A549 (cell line): ENCODE measurements at regions of chr1 and their contacts with region 1.

Region 1: GRCh38 chr1:183281553-183282091 is 95.6 kb downstream of the LAMC2 start:
- DNase-seq: peak; percentile 74 to 87
- ATAC-seq: peak; percentile 90 to 94
- H3K4me3 ChIP-seq: no peak overlapping the region
- H3K27ac ChIP-seq: 0 out of 6 replicates have a peak overlapping the region, but pooled peaks of 1 of the 2 experiments have one; percentile 2
- H3K4me1 ChIP-seq: peaks cover 3% of the 10 kb centered on the region; the same call in 1 of the 3 replicates
- CTCF ChIP-seq: peak; percentile 89
- EP300 ChIP-seq: no peak
- POLR2A ChIP-seq: no peak
- RAD21 ChIP-seq: peak; percentile 85 to 87

Region 2: DNA sequence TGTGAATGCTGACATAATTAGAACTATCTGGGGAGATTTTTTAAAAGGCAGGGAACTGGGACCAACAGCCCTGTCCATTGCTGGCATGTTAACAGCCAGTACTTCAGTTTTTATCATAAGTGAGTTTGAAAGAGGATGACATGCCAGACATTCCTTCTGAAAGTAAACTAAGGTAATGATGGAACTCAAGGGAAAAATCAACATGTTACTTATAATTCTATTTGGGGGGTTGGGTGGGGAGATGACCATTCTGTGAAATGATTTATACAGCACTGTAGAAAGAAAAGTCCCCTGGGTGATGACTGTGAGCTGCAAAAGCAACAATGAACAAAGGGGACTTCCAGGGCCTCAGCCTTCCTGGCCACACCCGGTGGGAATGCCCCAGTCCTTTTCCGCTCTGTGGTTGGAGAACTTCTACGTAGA is 101.0 kb before region 1 on chr1:
- CTCF ChIA-PET with region 1: no interaction called
- POLR2A ChIA-PET with region 1: no interaction called
- DNase-seq: peak; percentile 85 to 95
- ATAC-seq: peak; percentile 95 to 96
- H3K4me3 ChIP-seq: no peak overlapping the region
- H3K27ac ChIP-seq: peak overlapping the region; percentile 76 to 79
- H3K4me1 ChIP-seq: peaks cover 44% of the 10 kb centered on the region
- CTCF ChIP-seq: no peak
- EP300 ChIP-seq: peak in 1 of 2 experiments; percentile 66; a peak in 2 of 5 replicates
- POLR2A ChIP-seq: no peak
- RAD21 ChIP-seq: peak in 1 of 2 experiments; percentile 37; a peak in 3 of 5 replicates

Region 3: GRCh38 chr1:183259886-183260285 is 21.7 kb before region 1 on chr1:
- CTCF ChIA-PET with region 1: interaction called, 15 read pairs
- POLR2A ChIA-PET with region 1: no interaction called
- DNase-seq: no peak
- ATAC-seq: no peak
- H3K4me3 ChIP-seq: no peak overlapping the region
- H3K27ac ChIP-seq: no peak overlapping the region
- H3K4me1 ChIP-seq: no peaks in the 10 kb centered on the region
- CTCF ChIP-seq: no peak
- EP300 ChIP-seq: no peak
- POLR2A ChIP-seq: no peak
- RAD21 ChIP-seq: no peak

Region 4: DNA sequence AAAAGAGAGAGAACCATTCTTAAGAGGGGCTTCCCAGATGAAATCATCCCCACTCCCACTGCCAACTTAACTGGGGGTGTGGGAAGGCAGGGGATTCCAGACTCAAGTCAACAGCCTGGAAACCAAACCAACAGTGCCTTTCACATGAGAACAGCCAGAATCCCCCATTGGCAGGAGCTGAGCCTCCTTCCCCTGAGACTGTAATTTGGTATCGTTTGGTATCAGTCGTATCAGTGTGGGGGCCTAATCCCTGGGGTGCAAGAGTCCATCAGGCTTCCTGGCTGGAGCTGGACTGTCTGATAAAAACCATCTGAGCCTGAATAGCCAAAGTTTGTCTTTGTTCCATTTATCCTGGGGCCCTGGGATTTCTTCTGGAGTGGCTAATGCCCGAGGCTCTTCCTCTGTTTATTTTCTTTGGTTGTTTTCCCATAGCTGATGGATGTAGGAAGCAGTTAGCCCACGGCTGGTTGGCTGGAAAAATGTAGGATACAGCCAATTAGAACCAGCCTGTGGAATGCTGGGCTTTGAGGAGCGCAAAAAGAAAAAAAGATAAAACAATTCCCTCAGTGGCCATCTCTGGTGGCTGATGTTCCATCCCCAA is 11.0 kb before region 1 on chr1:
- CTCF ChIA-PET with region 1: interaction called, 71 read pairs
- POLR2A ChIA-PET with region 1: interaction called, 3 read pairs
- DNase-seq: no peak
- ATAC-seq: no peak
- H3K4me3 ChIP-seq: no peak overlapping the region
- H3K27ac ChIP-seq: 0 out of 6 replicates have a peak overlapping the region, but pooled peaks of 1 of the 2 experiments have one; percentile 2
- H3K4me1 ChIP-seq: peaks cover 24% of the 10 kb centered on the region
- CTCF ChIP-seq: no peak
- EP300 ChIP-seq: no peak
- POLR2A ChIP-seq: no peak
- RAD21 ChIP-seq: no peak

Region 5: GRCh38 chr1:183291802-183292514 is 10.3 kb after region 1 on chr1:
- CTCF ChIA-PET with region 1: interaction called, 36 read pairs
- POLR2A ChIA-PET with region 1: no interaction called
- DNase-seq: no peak
- ATAC-seq: no peak
- H3K4me3 ChIP-seq: no peak overlapping the region
- H3K27ac ChIP-seq: no peak overlapping the region
- H3K4me1 ChIP-seq: no peaks in the 10 kb centered on the region
- CTCF ChIP-seq: no peak
- EP300 ChIP-seq: no peak
- POLR2A ChIP-seq: no peak
- RAD21 ChIP-seq: no peak

Region 6: DNA sequence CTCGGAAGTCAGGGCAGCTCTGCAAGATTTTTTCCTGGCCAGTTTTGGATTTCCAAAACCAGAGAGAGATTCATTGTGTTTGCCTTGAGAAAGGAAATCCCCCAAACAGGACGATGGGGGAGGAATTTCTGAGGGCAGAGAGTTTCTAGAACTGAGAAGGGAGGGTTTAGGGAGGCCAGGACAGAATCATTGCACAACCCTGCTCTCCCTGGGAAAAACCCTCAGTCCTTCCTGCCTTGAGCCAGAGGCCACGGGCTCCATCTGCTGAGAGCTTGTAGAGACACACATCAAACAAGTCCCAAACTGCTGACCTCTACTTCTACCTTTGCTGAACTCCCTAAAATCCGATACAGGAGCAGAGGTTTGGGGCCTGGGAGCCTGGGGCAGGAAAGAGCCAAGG is 36.8 kb after region 1 on chr1:
- CTCF ChIA-PET with region 1: interaction called, 64 read pairs
- POLR2A ChIA-PET with region 1: no interaction called
- DNase-seq: peak; percentile 48 to 77
- ATAC-seq: peak; percentile 97 to 99
- H3K4me3 ChIP-seq: no peak overlapping the region
- H3K27ac ChIP-seq: peak overlapping the region in 1 of 2 experiments; percentile 44; a peak in 2 of 6 replicates
- H3K4me1 ChIP-seq: peaks cover 9% of the 10 kb centered on the region; the same call in 2 of the 3 replicates
- CTCF ChIP-seq: peak; percentile 49
- EP300 ChIP-seq: no peak
- POLR2A ChIP-seq: no peak
- RAD21 ChIP-seq: peak; percentile 72 to 78

Region 7: DNA sequence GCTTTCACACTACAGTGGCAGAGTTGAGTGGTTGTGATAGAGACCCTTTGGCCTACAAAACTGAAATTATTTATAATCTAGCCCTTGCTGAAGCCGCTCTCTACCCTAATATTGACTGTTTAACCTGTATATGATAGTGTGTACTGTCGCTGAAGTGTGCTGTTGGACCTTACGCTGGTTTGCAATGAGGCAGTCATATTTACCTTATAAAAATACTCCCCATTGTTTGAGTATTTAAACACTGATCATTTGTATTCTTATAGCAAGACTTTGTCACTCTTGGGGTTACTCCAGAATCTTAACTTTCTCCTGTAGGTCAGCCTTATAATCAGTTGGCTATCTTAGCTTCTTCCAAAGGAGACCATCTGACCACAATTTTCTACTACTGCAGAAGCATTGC is 247.0 kb after region 1 on chr1:
- CTCF ChIA-PET with region 1: no interaction called
- POLR2A ChIA-PET with region 1: no interaction called
- DNase-seq: no peak
- ATAC-seq: no peak
- H3K4me3 ChIP-seq: no peak overlapping the region
- H3K27ac ChIP-seq: no peak overlapping the region
- H3K4me1 ChIP-seq: 0 out of 3 replicates have a peak, but pooled peaks cover 6% of the 10 kb centered on the region
- CTCF ChIP-seq: no peak
- EP300 ChIP-seq: no peak
- POLR2A ChIP-seq: no peak
- RAD21 ChIP-seq: no peak

Region 8: GRCh38 chr1:183699616-183700160 is 418.1 kb after region 1 on chr1:
- CTCF ChIA-PET with region 1: no interaction called
- POLR2A ChIA-PET with region 1: no interaction called
- DNase-seq: peak; percentile 63 to 97
- ATAC-seq: peak; percentile 95 to 97
- H3K4me3 ChIP-seq: no peak overlapping the region
- H3K27ac ChIP-seq: peak overlapping the region; percentile 86 to 89
- H3K4me1 ChIP-seq: peaks cover 33% of the 10 kb centered on the region
- CTCF ChIP-seq: no peak
- EP300 ChIP-seq: peak; percentile 93 to 94
- POLR2A ChIP-seq: no peak
- RAD21 ChIP-seq: peak; percentile 22 to 67